ENCODE measurements at regions of chr1 and their contacts with region 1.

Region 1: DNA sequence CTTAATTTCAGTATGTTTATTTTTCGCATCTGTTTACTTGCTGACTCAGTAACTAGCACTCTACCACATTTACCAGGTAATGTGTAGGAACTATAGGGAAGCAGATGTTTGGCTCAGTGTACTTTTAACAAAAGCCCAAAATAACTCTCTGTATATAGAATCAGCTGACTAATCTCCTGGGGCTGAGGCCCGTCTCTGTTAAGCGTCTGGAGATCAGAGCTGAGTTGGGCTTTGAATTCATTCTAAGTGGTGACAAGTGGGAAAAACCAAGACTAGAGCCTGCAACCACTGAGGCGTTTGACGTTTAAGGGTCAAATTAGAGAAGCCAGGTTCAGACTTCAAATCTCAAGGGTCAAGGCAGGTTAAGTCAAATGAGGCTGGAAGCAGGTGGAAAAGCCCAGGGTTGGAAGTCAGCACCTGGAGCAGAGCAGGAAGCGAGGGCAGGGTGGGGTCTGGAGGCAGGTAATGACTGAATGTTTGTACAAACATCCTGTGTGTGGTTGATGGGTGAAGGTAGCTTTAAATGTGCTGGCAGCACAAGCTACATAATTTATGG is 56.8 kb upstream of the LYST start:
- DNase-seq: no peak
- ATAC-seq: peak; percentile 76
- H3K4me3 ChIP-seq: peak overlapping the region in 1 of 2 experiments; percentile 7; a peak in 2 of 4 replicates
- H3K27ac ChIP-seq: peak overlapping the region; percentile 99
- H3K4me1 ChIP-seq: peaks cover 62% of the 10 kb centered on the region
- H3K27me3 ChIP-seq: no peaks in the 10 kb centered on the region
- CTCF ChIP-seq: no peak

Region 2: GRCh38 chr1:235757587-235758096 is 165.9 kb before region 1 on chr1:
- CTCF ChIA-PET with region 1: no interaction called
- POLR2A ChIA-PET with region 1: interaction called, 12 read pairs
- in situ Hi-C with region 1: no loop called
- intact Hi-C with region 1: no loop called
- DNase-seq: no peak
- ATAC-seq: no peak
- H3K4me3 ChIP-seq: no peak overlapping the region
- H3K27ac ChIP-seq: no peak overlapping the region
- H3K4me1 ChIP-seq: no peaks in the 10 kb centered on the region
- H3K27me3 ChIP-seq: no peaks in the 10 kb centered on the region
- CTCF ChIP-seq: no peak

Region 3: GRCh38 chr1:236124956-236125355 is 201.4 kb after region 1 on chr1:
- CTCF ChIA-PET with region 1: no interaction called
- POLR2A ChIA-PET with region 1: no interaction called
- in situ Hi-C with region 1: no loop called
- intact Hi-C with region 1: no loop called
- DNase-seq: no peak
- ATAC-seq: peak; percentile 47
- H3K4me3 ChIP-seq: no peak overlapping the region
- H3K27ac ChIP-seq: no peak overlapping the region
- H3K4me1 ChIP-seq: peaks cover 3% of the 10 kb centered on the region; the same call in 1 of the 2 replicates
- H3K27me3 ChIP-seq: no peaks in the 10 kb centered on the region
- CTCF ChIP-seq: no peak

Measured in Panc1 (cell line).